ENCODE measurements at regions of chr6 and their contacts with region 1.

Region 1: GRCh38 chr6:52284460-52285176 is at the start of gene MCM3:
- DNase-seq: peak; percentile 99
- ATAC-seq: peak; percentile 98
- H3K4me3 ChIP-seq: peak within 1 kb of the TSS; percentile 93
- H3K27ac ChIP-seq: peak within 1 kb of the TSS; percentile 62
- H3K4me1 ChIP-seq: peaks cover 22% of the 10 kb centered on the region
- H3K27me3 ChIP-seq: no peaks in the 10 kb centered on the region
- CTCF ChIP-seq: no peak
- total RNA-seq, gene MCM3: 201 and 203 TPM in 2 replicates

Region 2: GRCh38 chr6:52271852-52272460 is 12.7 kb before region 1 on chr6:
- CTCF ChIA-PET with region 1: no interaction called
- POLR2A ChIA-PET with region 1: no interaction called
- intact Hi-C with region 1: loop called (anchors 1 kb)
- DNase-seq: peak; percentile 69
- ATAC-seq: peak; percentile 94
- H3K4me3 ChIP-seq: peak overlapping the region; percentile 10; the same call in 1 of the 2 replicates
- H3K27ac ChIP-seq: peak overlapping the region; percentile 63
- H3K4me1 ChIP-seq: peaks cover 29% of the 10 kb centered on the region
- H3K27me3 ChIP-seq: no peaks in the 10 kb centered on the region
- CTCF ChIP-seq: no peak

Region 3: GRCh38 chr6:52331793-52332457 is 47.3 kb after region 1 on chr6:
- CTCF ChIA-PET with region 1: no interaction called
- POLR2A ChIA-PET with region 1: no interaction called
- intact Hi-C with region 1: loop called (anchors 1 kb)
- DNase-seq: no peak
- ATAC-seq: peak; percentile 60
- H3K4me3 ChIP-seq: no peak overlapping the region
- H3K27ac ChIP-seq: 0 out of 2 replicates have a peak overlapping the region, but pooled peaks have one; percentile 10
- H3K4me1 ChIP-seq: peaks cover 35% of the 10 kb centered on the region
- H3K27me3 ChIP-seq: no peaks in the 10 kb centered on the region
- CTCF ChIP-seq: no peak

Region 4: GRCh38 chr6:52352239-52353008 is 67.8 kb after region 1 on chr6:
- CTCF ChIA-PET with region 1: interaction called, 7 read pairs
- POLR2A ChIA-PET with region 1: interaction called, 7 read pairs
- intact Hi-C with region 1: loop called (anchors 1 kb)
- DNase-seq: peak; percentile 99
- ATAC-seq: peak; percentile 93
- H3K4me3 ChIP-seq: peak overlapping the region; percentile 20; the same call in 1 of the 2 replicates
- H3K27ac ChIP-seq: peak overlapping the region; percentile 96
- H3K4me1 ChIP-seq: peaks cover 27% of the 10 kb centered on the region
- H3K27me3 ChIP-seq: no peaks in the 10 kb centered on the region
- CTCF ChIP-seq: no peak

Region 5: DNA sequence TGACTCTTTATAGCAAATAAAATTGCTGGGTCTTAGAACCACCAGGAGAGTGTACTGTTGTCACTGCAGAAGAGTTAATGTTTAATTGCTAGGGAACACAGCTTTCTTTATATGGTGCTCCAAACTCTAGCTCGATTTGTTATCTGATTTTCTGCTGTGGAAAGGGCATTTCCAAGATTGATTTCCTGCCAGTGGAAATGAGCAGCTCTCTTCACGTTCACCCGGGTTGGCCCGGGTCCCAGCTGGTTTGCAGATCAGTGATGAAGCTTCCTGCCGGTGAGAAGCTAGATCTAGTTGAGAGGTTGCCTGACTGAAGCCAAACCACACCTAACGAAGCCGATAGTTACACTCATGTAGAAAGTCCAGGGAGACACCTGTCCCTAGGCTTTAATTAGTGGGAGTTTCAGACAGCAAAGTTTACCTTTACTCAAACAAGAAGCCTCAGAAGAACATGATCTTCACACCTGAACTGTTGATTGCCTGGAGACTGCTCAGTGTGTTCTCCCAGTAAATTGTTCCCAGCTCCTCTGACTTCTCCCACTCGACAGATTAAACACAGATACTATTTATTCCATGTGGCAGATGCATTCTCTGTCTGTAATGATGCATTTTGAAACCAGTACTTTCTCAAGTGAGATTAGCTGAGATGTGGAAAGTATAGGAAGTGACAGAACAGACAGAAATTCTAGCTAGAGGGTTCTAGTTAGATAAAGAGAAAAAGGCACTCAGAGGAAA is 105.2 kb after region 1 on chr6:
- CTCF ChIA-PET with region 1: interaction called, 9 read pairs
- POLR2A ChIA-PET with region 1: no interaction called
- intact Hi-C with region 1: loop called (anchors 2 kb)
- DNase-seq: peak; percentile 91
- ATAC-seq: peak; percentile 87
- H3K4me3 ChIP-seq: peak overlapping the region; percentile 53
- H3K27ac ChIP-seq: peak overlapping the region; percentile 81
- H3K4me1 ChIP-seq: peaks cover 32% of the 10 kb centered on the region
- H3K27me3 ChIP-seq: no peaks in the 10 kb centered on the region
- CTCF ChIP-seq: peak; percentile 38; the same call in 1 of the 2 replicates

Region 6: DNA sequence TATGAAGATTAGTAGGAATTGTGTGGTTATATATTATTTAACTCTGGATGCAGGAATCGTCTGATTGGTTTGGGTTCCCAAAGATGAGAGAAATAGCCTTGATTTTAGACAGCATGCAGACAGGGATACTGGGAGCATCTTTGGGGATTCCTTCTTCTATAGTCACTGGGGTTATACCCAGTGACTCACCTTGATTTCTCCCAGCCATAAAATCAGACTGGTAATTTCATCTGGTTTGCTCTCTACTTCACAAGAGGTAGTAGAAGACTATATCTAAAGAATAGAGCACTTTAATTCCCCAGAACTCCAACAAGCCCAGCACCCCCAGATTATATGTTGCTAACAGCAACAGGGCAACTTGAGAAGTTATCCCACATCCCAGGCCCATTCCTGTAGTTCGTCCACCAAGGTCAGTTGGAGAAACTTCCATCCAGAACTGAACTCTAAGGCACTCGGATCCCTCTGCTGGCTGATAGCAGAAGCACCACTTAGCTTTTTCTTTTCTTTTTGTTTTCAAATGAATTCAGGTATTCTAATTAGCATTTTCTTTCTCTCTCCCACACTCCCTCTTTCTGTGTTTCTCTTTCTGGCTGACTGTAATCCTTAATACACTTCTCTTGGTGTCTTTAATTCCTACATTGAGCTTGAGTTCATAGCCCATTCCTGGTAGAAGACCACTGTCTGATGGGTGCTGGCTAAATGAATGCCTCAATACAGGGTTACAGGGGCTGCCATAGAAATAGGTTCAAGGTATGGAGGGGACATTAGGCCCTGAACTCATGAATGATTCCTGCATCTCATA is 115.1 kb after region 1 on chr6:
- CTCF ChIA-PET with region 1: interaction called, 6 read pairs
- POLR2A ChIA-PET with region 1: no interaction called
- intact Hi-C with region 1: loop called (anchors 1 kb)
- DNase-seq: peak; percentile 72
- ATAC-seq: peak; percentile 83
- H3K4me3 ChIP-seq: no peak overlapping the region
- H3K27ac ChIP-seq: no peak overlapping the region
- H3K4me1 ChIP-seq: peaks cover 14% of the 10 kb centered on the region
- H3K27me3 ChIP-seq: no peaks in the 10 kb centered on the region
- CTCF ChIP-seq: peak; percentile 97